PC-9 (cell line): ENCODE measurements at regions of chr4 and their contacts with region 1.

Region 1: GRCh38 chr4:83054928-83055327 is 19.9 kb downstream of the COPS4 start:
- DNase-seq: peak in 1 of 2 experiments; percentile 37
- H3K4me3 ChIP-seq: no peak overlapping the region
- H3K27ac ChIP-seq: no peak overlapping the region
- H3K4me1 ChIP-seq: no peaks in the 10 kb centered on the region
- H3K27me3 ChIP-seq: no peaks in the 10 kb centered on the region
- CTCF ChIP-seq: peak; percentile 63

Region 2: DNA sequence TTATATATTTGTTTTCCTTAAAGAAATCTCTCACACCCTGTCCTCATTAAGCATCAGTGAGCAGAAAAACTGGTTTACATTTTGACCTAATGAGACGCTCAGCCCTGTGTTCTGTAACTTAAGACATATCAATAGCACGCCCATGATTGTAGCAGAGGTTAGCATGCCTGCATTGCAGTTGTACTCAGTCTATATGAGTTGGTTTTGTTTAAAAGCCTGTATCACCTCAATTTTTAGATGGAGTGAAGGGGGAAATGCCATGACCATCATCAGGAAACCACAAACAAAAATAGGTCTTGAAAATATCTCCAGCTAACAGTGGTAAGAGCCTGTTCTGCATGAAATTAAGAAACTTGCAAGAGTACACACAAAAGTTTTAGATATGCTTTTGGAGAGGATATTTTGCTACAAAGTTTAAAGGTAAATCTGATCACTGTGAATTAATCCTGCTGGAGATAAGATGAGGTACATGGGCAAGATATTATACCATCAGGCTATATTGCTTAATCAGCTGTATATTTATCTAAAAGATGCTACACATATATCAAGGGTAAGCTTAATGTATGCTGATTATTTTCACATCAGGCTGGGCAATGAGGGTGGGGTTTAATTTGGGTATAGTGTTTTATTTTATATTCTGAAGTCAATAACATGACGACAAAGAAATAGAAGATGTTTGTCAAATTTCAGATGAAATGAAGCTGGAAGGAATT is 242.8 kb after region 1 on chr4:
- CTCF ChIA-PET with region 1: no interaction called
- POLR2A ChIA-PET with region 1: no interaction called
- intact Hi-C with region 1: no loop called
- DNase-seq: no peak
- H3K4me3 ChIP-seq: no peak overlapping the region
- H3K27ac ChIP-seq: no peak overlapping the region
- H3K4me1 ChIP-seq: no peaks in the 10 kb centered on the region
- H3K27me3 ChIP-seq: no peaks in the 10 kb centered on the region
- CTCF ChIP-seq: no peak

Region 3: GRCh38 chr4:83413676-83414075 is 358.7 kb after region 1 on chr4:
- CTCF ChIA-PET with region 1: no interaction called
- POLR2A ChIA-PET with region 1: interaction called, 12 read pairs
- intact Hi-C with region 1: no loop called
- DNase-seq: no peak
- H3K4me3 ChIP-seq: no peak overlapping the region
- H3K27ac ChIP-seq: no peak overlapping the region
- H3K4me1 ChIP-seq: no peaks in the 10 kb centered on the region
- H3K27me3 ChIP-seq: no peaks in the 10 kb centered on the region
- CTCF ChIP-seq: no peak